ENCODE measurements at regions of chr19 and their contacts with region 1.

Region 1: DNA sequence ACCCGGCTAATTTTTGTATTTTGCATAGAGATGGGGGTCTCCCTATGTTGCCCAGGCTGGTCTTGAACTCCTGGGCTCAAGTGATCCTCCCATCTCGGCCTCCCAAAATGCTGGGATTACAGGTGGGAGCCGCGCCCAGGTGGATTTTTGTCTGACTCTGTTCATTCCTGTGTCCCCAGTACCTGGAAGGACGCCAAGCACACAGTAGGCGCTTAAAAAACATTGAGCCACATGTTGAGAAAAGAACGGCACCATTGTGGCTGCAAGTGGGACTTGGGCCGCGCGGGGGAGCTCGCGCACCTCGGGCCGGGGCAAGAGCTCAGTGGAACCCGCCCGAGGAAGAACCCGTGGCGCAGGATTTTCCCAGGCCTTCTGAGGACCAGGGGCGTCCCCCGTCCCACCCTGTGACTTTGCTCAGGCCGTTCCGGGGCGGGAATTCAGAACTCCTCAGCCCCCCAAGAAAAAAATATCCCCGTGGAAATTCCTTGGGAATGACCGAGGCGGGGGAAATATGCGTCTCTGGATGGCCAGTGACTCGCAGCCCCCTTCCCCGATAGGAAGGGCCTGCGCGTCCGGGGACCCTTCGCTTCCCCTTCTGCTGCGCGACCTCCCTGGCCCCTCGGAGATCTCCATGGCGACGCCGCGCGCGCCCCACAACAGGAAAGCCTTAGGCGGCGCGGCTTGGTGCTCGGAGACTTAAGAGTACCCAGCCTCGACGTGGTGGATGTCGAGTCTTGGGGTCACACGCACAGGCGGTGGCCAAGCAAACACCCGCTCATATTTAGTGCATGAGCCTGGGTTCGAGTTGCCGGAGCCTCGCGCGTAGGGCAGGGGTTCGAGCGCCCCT is 1.4 kb upstream of the ICAM1 start:
- DNase-seq: peak; percentile 93
- H3K4me3 Mint-ChIP-seq: peak overlapping the region; percentile 85
- H3K27ac Mint-ChIP-seq: peak overlapping the region; percentile 89
- H3K4me1 Mint-ChIP-seq: peaks cover 30% of the 10 kb centered on the region
- H3K27me3 Mint-ChIP-seq: no peaks in the 10 kb centered on the region

Region 2: GRCh38 chr19:10243606-10244005 is 25.9 kb before region 1 on chr19:
- CTCF ChIA-PET with region 1: no interaction called
- POLR2A ChIA-PET with region 1: no interaction called
- intact Hi-C with region 1: no loop called
- DNase-seq: no peak
- H3K4me3 Mint-ChIP-seq: no peak overlapping the region
- H3K27ac Mint-ChIP-seq: no peak overlapping the region
- H3K4me1 Mint-ChIP-seq: no peaks in the 10 kb centered on the region
- H3K27me3 Mint-ChIP-seq: no peaks in the 10 kb centered on the region

Region 3: DNA sequence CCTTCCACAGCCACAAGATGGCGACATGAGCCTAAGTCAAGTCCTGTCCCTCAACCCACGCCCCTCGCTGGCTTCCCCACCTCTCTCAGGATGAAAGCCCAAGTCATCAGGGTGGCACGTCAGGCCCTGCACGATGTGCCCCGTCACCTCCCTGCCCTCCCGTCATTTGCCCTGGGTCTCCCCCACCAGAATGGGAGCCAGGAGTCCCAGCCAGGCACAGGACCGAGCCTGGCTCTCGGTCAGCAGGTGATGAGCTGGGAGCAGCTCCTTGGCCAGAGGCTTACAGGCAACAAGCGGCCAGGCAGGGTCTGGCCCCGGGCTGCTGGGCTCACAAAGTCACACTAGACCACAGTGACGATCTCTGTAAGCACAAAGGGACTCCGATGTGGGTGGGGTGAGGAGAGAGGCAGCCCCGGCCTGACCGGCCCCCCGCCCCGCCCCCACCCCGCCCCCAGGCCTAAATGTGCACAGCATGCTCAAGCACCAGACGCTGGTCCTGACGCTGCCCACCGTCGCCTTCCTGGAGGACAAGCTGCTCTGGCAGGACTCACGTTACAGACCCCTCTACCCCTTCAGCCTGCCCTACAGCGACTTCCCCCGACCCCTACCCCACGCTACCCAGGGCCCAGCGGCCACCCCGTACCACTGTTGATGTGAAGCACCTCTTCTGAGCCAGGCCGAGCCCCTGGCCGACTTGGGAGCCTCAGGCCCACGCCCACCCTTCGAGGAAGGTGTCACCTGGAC is 10.2 kb before region 1 on chr19:
- CTCF ChIA-PET with region 1: interaction called, 104 read pairs
- POLR2A ChIA-PET with region 1: interaction called, 69 read pairs
- intact Hi-C with region 1: loop called (anchors 1 kb)
- DNase-seq: peak; percentile 98
- H3K4me3 Mint-ChIP-seq: no peak overlapping the region
- H3K27ac Mint-ChIP-seq: peak overlapping the region; percentile 93
- H3K4me1 Mint-ChIP-seq: peaks cover 26% of the 10 kb centered on the region
- H3K27me3 Mint-ChIP-seq: no peaks in the 10 kb centered on the region

Region 4: GRCh38 chr19:10286803-10287737 is 17.5 kb after region 1 on chr19 and contains the start of gene ICAM4:
- CTCF ChIA-PET with region 1: interaction called, 57 read pairs
- POLR2A ChIA-PET with region 1: interaction called, 47 read pairs
- intact Hi-C with region 1: loop called (anchors 1 kb)
- DNase-seq: peak; percentile 55
- H3K4me3 Mint-ChIP-seq: no peak within 1 kb of the TSS
- H3K27ac Mint-ChIP-seq: no peak within 1 kb of the TSS
- H3K4me1 Mint-ChIP-seq: peaks cover 56% of the 10 kb centered on the region
- H3K27me3 Mint-ChIP-seq: peaks cover 40% of the 10 kb centered on the region
- total RNA-seq, gene ICAM4: 0.34 to 0.59 TPM

Region 5: GRCh38 chr19:10332955-10333757 is 63.6 kb after region 1 on chr19 and contains the start of gene RAVER1:
- CTCF ChIA-PET with region 1: interaction called, 8 read pairs
- POLR2A ChIA-PET with region 1: interaction called, 23 read pairs
- intact Hi-C with region 1: loop called (anchors 1 kb)
- DNase-seq: peak; percentile 99
- H3K4me3 Mint-ChIP-seq: peak within 1 kb of the TSS; percentile 95
- H3K27ac Mint-ChIP-seq: peak within 1 kb of the TSS; percentile 96
- H3K4me1 Mint-ChIP-seq: peaks cover 37% of the 10 kb centered on the region
- H3K27me3 Mint-ChIP-seq: no peaks in the 10 kb centered on the region
- total RNA-seq, gene RAVER1: 81.5 to 85.0 TPM

Region 6: DNA sequence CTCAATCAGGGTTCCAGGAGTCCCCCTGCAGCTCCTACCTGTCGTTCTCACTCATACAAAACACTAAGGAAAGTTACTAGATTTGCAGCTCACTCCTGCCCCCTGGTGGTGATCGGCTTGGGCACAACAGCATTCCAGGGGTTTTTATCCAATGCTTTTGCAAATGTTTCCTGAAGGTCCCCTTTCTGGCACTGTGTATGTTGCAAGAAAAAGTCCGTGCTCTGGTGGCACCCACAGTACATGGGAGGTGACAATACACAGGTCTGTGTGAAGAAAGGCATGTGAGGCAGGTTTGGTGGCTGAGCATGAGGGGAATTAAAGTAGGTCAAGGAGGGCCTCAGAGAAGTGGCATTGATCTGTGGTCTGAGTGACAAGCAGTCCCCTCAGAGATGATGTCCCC is 119.4 kb after region 1 on chr19:
- CTCF ChIA-PET with region 1: interaction called, 212 read pairs
- POLR2A ChIA-PET with region 1: interaction called, 10 read pairs
- intact Hi-C with region 1: loop called (anchors 1 kb)
- DNase-seq: peak; percentile 89
- H3K4me3 Mint-ChIP-seq: no peak overlapping the region
- H3K27ac Mint-ChIP-seq: no peak overlapping the region
- H3K4me1 Mint-ChIP-seq: peaks cover 7% of the 10 kb centered on the region
- H3K27me3 Mint-ChIP-seq: no peaks in the 10 kb centered on the region

Measured in activated CD4-positive, alpha-beta memory T cell treated with anti-CD3 and anti-CD28 coated beads for 36 hours (primary cell).